Activated CD8-positive, alpha-beta T cell treated with anti-CD3 and anti-CD28 coated beads, Interleukin-2, amount 10 ng/mL, durations not matched to agents 7 days and 5 days (primary cell): ENCODE measurements at regions of chr2 and their contacts with region 1.

Region 1: DNA sequence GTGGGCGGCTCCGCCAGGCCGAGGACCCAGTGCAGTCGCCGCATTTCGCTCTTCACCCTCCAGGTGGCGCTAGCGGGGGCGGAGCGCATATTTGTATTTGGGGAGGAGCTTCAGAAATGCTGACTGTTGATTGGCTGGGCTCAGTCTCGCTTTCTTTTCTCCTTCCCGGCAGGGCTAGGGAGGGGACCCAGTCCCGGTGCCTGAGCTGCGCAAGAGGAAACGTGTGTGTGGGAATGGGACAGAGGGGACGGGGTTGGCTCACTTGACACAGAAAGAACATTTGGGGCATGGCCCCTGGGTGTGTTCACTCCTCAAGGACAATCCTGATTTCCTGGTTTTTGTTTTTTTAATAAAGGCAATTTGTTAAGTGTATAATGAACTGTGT is 20.3 kb upstream of the DNMT3A start:
- DNase-seq: peak; percentile 96
- ATAC-seq: peak; percentile 98
- H3K4me3 Mint-ChIP-seq: peak overlapping the region; percentile 82
- H3K27ac Mint-ChIP-seq: peak overlapping the region; percentile 93
- H3K4me1 Mint-ChIP-seq: peaks cover 20% of the 10 kb centered on the region
- H3K27me3 Mint-ChIP-seq: no peaks in the 10 kb centered on the region

Region 2: GRCh38 chr2:25276569-25277465 is 85.2 kb before region 1 on chr2:
- CTCF ChIA-PET with region 1: interaction called, 20 read pairs
- POLR2A ChIA-PET with region 1: interaction called, 20 read pairs
- DNase-seq: peak; percentile 79
- ATAC-seq: peak; percentile 60
- H3K4me3 Mint-ChIP-seq: peak overlapping the region; percentile 65
- H3K27ac Mint-ChIP-seq: peak overlapping the region; percentile 96
- H3K4me1 Mint-ChIP-seq: peaks cover 78% of the 10 kb centered on the region
- H3K27me3 Mint-ChIP-seq: no peaks in the 10 kb centered on the region

Region 3: DNA sequence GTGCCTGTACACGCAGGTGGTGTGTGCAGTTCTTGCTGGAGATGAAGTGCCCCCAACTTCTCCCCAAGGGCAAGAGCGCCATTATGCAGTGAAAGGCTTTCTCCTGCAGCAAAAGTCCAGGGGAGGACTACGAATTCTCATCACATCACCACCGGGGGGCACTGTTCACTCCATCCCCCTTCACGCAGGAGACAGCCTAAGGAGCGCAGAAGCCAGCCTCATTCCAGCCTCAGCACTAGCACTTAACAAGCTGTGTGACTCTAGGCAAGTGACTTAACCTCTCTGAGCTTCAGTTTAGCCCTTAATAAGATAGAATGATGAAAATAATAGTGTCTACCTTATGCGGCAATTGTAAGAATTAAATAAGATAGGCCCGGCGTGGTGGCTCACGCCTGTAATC is 52.6 kb before region 1 on chr2:
- CTCF ChIA-PET with region 1: interaction called, 30 read pairs
- POLR2A ChIA-PET with region 1: interaction called, 11 read pairs
- DNase-seq: peak; percentile 79
- ATAC-seq: peak; percentile 45
- H3K4me3 Mint-ChIP-seq: no peak overlapping the region
- H3K27ac Mint-ChIP-seq: peak overlapping the region; percentile 37
- H3K4me1 Mint-ChIP-seq: peaks cover 77% of the 10 kb centered on the region
- H3K27me3 Mint-ChIP-seq: no peaks in the 10 kb centered on the region

Region 4: GRCh38 chr2:25337276-25337675 is 24.8 kb before region 1 on chr2:
- CTCF ChIA-PET with region 1: interaction called, 26 read pairs
- POLR2A ChIA-PET with region 1: interaction called, 14 read pairs
- DNase-seq: peak; percentile 40
- ATAC-seq: no peak
- H3K4me3 Mint-ChIP-seq: peak overlapping the region; percentile 16
- H3K27ac Mint-ChIP-seq: peak overlapping the region; percentile 74
- H3K4me1 Mint-ChIP-seq: peaks cover 70% of the 10 kb centered on the region
- H3K27me3 Mint-ChIP-seq: no peaks in the 10 kb centered on the region

Region 5: DNA sequence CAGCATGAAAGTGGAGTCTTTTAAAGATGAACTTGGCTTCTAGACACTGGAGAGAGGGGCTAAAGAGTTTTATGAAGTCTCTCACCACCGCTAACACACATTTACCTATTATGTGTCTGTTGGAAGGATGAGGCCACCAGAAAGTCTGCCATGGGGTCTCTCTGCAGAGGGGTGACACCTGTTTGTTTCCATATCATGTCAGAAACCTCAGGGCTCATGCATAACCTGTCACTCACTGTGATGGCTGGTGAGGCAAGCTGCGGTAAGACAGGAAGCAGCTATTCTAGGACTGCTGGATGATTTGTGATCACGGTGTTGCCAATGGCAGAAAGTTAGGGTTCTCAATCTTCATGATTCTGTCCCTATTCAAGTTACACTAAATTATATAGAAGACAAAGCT is 40.4 kb after region 1 on chr2:
- CTCF ChIA-PET with region 1: interaction called, 25 read pairs
- POLR2A ChIA-PET with region 1: interaction called, 3 read pairs
- DNase-seq: peak; percentile 69
- ATAC-seq: peak; percentile 70
- H3K4me3 Mint-ChIP-seq: peak overlapping the region; percentile 43
- H3K27ac Mint-ChIP-seq: peak overlapping the region; percentile 98
- H3K4me1 Mint-ChIP-seq: peaks cover 41% of the 10 kb centered on the region
- H3K27me3 Mint-ChIP-seq: no peaks in the 10 kb centered on the region

Region 6: DNA sequence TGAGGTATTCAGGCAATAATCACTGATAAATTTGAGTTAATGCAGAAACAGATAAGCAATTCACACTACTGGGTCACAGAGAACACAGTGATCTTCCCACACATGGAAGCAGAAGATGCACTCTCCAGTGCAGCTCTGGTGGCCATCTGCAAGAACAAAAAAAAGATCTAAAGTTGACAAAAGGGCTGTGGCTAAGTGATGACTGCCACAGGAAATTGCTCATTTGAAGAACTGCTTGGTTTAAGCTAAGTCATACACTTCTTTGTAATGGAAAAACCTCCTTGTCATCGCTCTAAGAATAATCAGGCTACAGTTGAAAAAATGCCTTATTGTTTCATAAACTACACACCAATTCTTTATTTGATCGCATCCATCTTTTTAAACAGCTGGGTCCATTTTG is 196.2 kb after region 1 on chr2:
- CTCF ChIA-PET with region 1: interaction called, 37 read pairs
- POLR2A ChIA-PET with region 1: interaction called, 7 read pairs
- DNase-seq: peak; percentile 68
- ATAC-seq: peak; percentile 98
- H3K4me3 Mint-ChIP-seq: peak overlapping the region; percentile 35
- H3K27ac Mint-ChIP-seq: peak overlapping the region; percentile 92
- H3K4me1 Mint-ChIP-seq: peaks cover 44% of the 10 kb centered on the region
- H3K27me3 Mint-ChIP-seq: no peaks in the 10 kb centered on the region